Astrocyte of the cerebellum (primary cell): ENCODE measurements at regions of chr3 and their contacts with region 1.

Region 1: DNA sequence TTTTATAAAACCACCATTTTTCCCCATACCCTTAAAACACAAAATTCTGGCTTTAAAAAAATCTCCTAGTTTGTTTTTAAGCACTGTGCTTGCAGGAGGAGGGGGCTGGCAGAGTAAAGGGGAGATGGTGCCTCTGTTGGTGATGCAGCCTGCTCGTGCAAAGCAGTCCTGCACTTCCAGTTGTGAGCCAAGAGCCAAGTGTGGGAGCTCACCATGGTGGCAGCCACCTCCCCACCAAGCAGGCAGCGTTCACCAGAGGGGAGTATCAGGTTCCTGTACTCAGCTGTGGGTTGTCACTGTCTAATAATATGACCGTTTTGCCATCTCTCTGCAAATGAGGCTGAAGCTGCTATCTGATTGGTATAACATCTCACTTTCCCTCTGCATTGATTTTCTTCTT is 164.8 kb downstream of the SYNPR start:
- DNase-seq: no peak
- H3K4me3 ChIP-seq: no peak overlapping the region
- CTCF ChIP-seq: no peak

Region 2: DNA sequence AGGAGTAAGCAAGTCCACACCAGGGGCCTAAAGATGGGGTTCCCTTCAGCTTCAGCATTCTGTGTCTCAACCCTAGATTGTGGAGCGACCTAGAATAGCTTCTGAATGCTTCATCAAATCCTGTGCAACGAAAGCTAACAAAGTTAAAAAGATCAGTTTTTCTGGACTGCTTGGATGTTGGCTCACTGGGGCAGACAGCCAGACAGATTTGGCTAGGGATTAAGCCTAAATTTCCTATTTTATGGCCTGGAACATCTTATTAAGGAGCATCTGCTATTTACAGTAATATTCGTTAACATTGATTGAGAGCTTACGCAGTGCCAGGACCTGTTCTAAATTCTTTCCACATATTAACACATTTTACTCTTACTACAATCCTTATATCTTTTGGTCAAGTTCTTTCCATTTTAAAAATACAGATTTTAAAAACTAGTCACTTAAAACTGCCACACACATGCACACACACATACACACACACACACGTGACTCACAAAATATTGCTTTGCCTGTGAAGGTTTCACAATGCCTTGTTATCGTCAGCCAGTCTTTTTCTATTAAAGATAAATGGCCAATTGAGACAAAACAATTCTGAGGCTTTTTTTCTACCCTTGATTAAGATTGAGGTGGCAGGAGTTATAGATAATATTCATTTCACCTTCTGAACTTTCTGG is 36.2 kb after region 1 on chr3:
- in situ Hi-C with region 1: loop called (anchors 5 kb)
- DNase-seq: no peak
- H3K4me3 ChIP-seq: no peak overlapping the region
- CTCF ChIP-seq: no peak

Region 3: GRCh38 chr3:63493101-63493500 is 50.2 kb after region 1 on chr3:
- in situ Hi-C with region 1: no loop called
- DNase-seq: no peak
- H3K4me3 ChIP-seq: no peak overlapping the region
- CTCF ChIP-seq: no peak

Region 4: DNA sequence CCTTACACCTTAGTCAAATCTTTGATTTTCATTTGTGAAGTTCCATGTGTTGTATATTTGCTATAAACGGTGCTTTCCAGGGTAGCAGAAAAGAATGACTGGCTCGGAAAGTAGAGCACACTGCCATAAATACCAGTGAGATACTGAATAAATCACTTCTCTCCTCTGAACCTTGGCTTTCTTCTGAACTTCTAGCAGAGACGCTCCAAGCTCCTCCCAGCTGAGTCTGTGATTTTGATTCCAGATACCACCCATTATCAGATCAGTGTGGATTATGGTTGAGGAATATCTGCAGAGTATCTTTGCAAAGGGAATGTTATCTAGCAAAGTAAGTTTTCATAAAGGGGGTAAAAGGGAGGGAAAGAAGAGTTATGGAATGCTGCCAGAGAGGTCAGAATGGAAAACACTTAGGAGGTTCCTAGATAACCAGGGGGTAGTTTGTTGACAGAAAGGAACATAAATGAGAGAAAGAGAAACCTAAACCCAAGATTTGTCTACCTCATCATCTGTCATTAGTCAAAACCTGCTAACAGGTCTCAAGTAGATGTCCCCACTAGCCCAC is 678.9 kb after region 1 on chr3:
- in situ Hi-C with region 1: no loop called
- DNase-seq: no peak
- H3K4me3 ChIP-seq: no peak overlapping the region
- CTCF ChIP-seq: no peak